Ovary (tissue), 10 donors: ENCODE measurements at regions of chr10 and their contacts with region 1.

Region 1: GRCh38 chr10:68397005-68397404 is 10.1 kb downstream of the RUFY2 start:
- DNase-seq: no peak
- H3K4me3 ChIP-seq: no peak overlapping the region
- H3K27ac ChIP-seq: no peak overlapping the region
- H3K4me1 ChIP-seq: no peaks in the 10 kb centered on the region
- H3K27me3 ChIP-seq: no peaks in the 10 kb centered on the region
- CTCF ChIP-seq: no peak
- EP300 ChIP-seq: no peak
- POLR2A ChIP-seq: no peak

Region 2: DNA sequence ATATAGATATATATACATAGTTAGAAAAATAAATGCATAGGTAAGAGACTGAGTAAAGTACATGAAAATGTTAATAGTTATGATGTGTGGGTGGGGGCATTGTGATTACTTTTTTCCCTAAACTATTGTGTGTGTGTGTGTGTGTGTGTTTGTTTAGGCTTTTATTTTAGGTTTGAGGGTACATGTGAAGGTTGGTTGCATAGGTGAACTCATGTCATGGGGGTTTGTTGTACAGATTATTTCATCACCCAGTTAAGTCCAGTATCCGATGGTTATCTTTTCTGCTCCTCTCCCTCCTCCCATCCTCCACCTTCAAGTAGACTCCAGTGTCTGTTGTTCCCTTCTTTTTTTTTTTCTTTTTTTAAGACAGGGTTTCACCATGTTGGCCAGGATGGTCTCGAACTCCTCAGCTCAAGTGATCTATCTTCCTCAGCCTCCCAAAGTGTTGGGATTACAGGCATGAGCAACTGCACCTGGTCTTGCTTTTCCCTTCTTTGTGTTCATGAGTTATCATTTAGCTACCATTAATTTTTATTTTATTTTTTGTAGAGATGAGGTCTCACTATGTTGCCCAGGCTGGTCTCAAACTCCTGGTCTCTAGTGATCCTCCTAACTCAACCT is 12.0 kb after region 1 on chr10:
- intact Hi-C with region 1: no loop called
- DNase-seq: no peak
- H3K4me3 ChIP-seq: no peak overlapping the region
- H3K27ac ChIP-seq: no peak overlapping the region
- H3K4me1 ChIP-seq: no peaks in the 10 kb centered on the region
- H3K27me3 ChIP-seq: no peaks in the 10 kb centered on the region
- CTCF ChIP-seq: no peak
- EP300 ChIP-seq: no peak
- POLR2A ChIP-seq: no peak

Region 3: DNA sequence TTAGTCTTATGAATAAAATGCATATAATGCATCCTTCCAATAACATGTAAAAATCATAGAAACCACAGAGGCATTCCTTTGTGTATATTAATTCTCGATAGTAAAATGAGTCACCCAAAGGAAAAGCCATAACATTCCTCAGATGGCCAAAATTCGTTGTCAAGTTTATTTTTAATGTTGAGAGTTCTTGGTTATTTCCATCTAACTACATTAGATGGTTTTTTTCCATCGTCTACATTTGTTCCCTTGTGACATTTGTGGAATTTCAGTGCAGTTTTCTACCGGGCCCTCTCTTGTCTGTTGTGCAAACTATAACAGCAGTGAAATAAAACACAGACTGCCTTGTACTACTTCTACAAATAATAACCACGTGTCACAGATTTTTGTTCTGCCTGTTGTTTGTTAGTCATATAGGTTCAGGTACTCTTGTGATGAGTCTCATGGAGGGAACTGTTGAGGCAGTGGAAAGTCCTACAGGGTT is 269.3 kb after region 1 on chr10:
- intact Hi-C with region 1: no loop called
- DNase-seq: no peak
- H3K4me3 ChIP-seq: no peak overlapping the region
- H3K27ac ChIP-seq: no peak overlapping the region
- H3K4me1 ChIP-seq: no peaks in the 10 kb centered on the region
- H3K27me3 ChIP-seq: no peaks in the 10 kb centered on the region
- CTCF ChIP-seq: no peak
- EP300 ChIP-seq: no peak
- POLR2A ChIP-seq: no peak

Region 4: GRCh38 chr10:68759967-68760366 is 363.0 kb after region 1 on chr10:
- intact Hi-C with region 1: loop called in 1 of 4 experiments (anchors 10 kb)
- DNase-seq: no peak
- H3K4me3 ChIP-seq: no peak overlapping the region
- H3K27ac ChIP-seq: no peak overlapping the region
- H3K4me1 ChIP-seq: no peaks in the 10 kb centered on the region
- H3K27me3 ChIP-seq: no peaks in the 10 kb centered on the region
- CTCF ChIP-seq: no peak
- EP300 ChIP-seq: no peak
- POLR2A ChIP-seq: no peak